Activated CD4-positive, alpha-beta memory T cell treated with anti-CD3 and anti-CD28 coated beads, Interleukin-2, amount 10 ng/mL, durations not matched to agents 7 days and 5 days (primary cell): ENCODE measurements at regions of chr14 and their contacts with region 1.

Region 1: DNA sequence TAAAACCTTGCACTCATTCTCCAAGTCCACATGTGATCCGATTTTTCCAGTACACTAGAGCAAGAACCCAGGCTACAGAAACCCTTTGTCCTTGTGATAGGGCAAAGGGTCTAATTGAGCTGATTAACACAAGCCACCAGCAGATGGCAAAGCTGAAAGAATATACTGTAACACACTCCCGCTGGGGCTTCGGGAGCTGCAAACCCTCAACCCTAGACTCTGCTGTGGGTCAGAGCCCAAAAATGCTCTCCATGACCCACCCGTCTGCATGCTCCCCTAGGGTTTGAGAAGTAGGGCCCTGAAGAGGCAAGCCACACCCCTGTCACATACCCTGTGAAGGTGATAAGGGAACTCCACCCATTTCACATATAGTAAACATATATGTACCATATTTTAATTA is 33.6 kb upstream of the PCNX1 start:
- DNase-seq: no peak
- H3K4me3 Mint-ChIP-seq: no peak overlapping the region
- H3K27ac Mint-ChIP-seq: no peak overlapping the region
- H3K4me1 Mint-ChIP-seq: peaks cover 25% of the 10 kb centered on the region
- H3K27me3 Mint-ChIP-seq: no peaks in the 10 kb centered on the region

Region 2: GRCh38 chr14:70794294-70794693 is 79.3 kb before region 1 on chr14:
- CTCF ChIA-PET with region 1: no interaction called
- POLR2A ChIA-PET with region 1: no interaction called
- DNase-seq: no peak
- H3K4me3 Mint-ChIP-seq: no peak overlapping the region
- H3K27ac Mint-ChIP-seq: no peak overlapping the region
- H3K4me1 Mint-ChIP-seq: no peaks in the 10 kb centered on the region
- H3K27me3 Mint-ChIP-seq: no peaks in the 10 kb centered on the region

Region 3: GRCh38 chr14:70897464-70897863 is 23.8 kb after region 1 on chr14:
- CTCF ChIA-PET with region 1: interaction called, 4 read pairs
- POLR2A ChIA-PET with region 1: interaction called, 11 read pairs
- DNase-seq: no peak
- H3K4me3 Mint-ChIP-seq: no peak overlapping the region
- H3K27ac Mint-ChIP-seq: no peak overlapping the region
- H3K4me1 Mint-ChIP-seq: peaks cover 59% of the 10 kb centered on the region
- H3K27me3 Mint-ChIP-seq: peaks cover 31% of the 10 kb centered on the region